Cardiac septum (tissue), 1 donor: ENCODE measurements at regions of chr15 and their contacts with region 1.

Region 1: GRCh38 chr15:69729161-69729748 is 276.6 kb downstream of the RPLP1 start:
- DNase-seq: no peak

Region 2: GRCh38 chr15:69320977-69321554 is 408.2 kb before region 1 on chr15:
- intact Hi-C with region 1: no loop called
- DNase-seq: no peak

Region 3: DNA sequence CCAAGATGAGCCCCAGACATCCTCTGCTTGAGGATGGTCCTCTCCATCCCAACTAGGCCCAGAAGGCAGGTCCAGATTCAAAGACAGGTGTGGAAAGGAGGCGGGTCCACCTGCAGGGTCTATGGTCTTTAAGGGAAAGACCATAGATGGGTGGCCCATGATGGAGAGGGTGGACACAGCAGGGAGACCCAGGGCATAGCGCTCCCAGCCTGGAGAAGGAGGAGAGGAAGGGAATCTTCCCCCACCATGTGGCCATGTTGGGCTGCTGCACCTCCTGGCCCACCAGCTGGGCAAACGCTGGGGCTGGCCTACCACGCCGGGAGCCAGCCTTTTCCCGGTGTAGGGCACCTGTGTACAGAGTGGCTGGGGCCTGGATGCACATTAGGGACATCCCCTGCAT is 633.6 kb after region 1 on chr15:
- intact Hi-C with region 1: loop called (anchors 10 kb)
- DNase-seq: peak; percentile 72

Region 4: DNA sequence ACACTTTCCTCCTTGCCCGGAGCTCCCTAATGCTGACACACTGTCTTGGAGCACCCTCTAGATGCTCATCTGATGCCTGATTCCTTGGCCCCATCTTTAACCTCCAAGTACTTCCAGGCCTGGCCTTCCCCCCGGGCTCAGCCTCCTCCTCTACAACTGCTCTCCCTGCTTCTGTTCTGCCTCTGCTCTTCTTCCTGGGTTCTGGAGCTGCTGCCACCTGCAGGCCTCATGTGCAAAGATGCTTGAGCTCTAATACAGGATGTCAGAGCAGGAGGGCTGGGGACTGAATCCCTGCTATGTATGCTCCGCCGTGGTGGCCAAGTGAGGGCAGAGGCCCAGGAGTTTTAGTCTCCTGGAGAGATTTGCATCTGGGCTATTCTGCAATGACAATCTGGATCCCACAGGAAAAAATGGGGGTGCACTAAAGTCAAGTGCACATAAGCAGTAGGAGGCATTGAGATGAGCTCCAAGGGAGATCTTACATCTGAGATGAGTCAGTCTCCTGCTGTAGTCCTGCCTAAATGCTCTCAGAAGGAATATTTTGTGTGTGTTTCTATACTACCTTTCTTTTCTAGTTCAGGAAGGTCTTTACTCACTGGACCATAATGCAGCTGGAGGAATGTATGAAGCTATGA is 737.8 kb after region 1 on chr15:
- intact Hi-C with region 1: loop called (anchors 10 kb)
- DNase-seq: no peak